Esophagus muscularis mucosa (tissue), 4 donors: ENCODE measurements at regions of chr17 and their contacts with region 1.

Region 1: GRCh38 chr17:31696184-31696602 is 162.9 kb downstream of the COPRS start:
- DNase-seq: peak; percentile 96
- H3K4me3 ChIP-seq: no peak overlapping the region
- H3K27ac ChIP-seq: peak overlapping the region; percentile 71 to 78 (median 76)
- H3K4me1 ChIP-seq: peaks cover 47 to 90% (median 83%) of the 10 kb centered on the region in 4 donors
- H3K27me3 ChIP-seq: no peaks in the 10 kb centered on the region
- CTCF ChIP-seq: peak in 1 of 3 experiments; percentile 36
- EP300 ChIP-seq: no peak
- POLR2A ChIP-seq: no peak

Region 2: GRCh38 chr17:31558748-31559644 is 137.2 kb before region 1 on chr17:
- intact Hi-C with region 1: loop called (anchors 2 kb)
- DNase-seq: no peak
- H3K4me3 ChIP-seq: peak overlapping the region; percentile 65 to 86 (median 68)
- H3K27ac ChIP-seq: peak overlapping the region; percentile 90 to 95 (median 92)
- H3K4me1 ChIP-seq: peaks cover 27 to 54% (median 52%) of the 10 kb centered on the region in 4 donors
- H3K27me3 ChIP-seq: no peaks in the 10 kb centered on the region
- CTCF ChIP-seq: peak; percentile 96 to 98 (median 96)
- EP300 ChIP-seq: no peak
- POLR2A ChIP-seq: no peak

Region 3: DNA sequence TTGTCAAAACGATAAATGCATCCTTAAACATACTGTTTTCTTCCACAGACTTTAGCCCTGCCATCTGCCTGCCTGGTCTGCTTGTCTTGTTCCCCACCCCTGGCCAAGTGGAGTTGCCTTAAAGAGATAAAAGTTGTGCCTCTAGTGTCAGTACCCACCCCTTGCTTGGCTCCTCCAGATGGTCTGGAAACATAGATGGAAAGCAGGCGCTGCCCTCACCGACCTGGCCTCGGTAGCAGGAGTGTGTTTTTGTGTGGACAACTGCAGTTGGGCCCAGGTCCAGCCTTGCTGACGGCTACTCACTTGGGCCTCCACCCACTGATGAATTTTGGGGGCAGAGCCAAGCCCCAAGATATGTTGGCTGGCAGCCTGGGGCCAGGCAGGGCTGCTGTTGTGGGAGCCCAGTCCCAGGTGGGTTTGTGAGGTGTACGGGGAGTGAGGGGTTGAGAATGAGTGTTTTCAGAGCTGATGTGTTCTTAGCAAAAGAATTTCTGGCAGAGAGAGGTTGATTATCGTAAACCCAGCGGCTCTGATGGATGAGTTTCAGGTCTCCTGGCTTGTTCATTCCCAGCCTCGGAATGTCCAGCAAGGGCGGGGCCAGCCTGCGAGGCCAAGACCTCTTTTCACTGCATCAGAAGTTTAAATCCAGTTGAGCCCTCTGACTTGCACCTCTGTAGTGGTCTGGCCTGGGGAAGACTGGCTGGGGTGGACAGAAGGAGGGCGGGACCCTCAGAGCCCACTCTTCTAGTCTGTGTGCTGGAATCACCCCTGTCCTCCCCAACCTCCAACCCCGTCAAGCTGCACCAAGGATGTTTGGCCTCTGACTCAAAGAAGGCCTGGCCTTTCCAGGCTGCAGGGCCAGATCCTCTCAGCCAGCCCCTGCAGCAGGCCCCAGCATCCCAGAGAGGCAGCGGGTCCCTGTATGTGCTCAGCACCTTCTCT is 125.0 kb before region 1 on chr17:
- intact Hi-C with region 1: loop called (anchors 5 kb)
- DNase-seq: peak; percentile 96
- H3K4me3 ChIP-seq: peak overlapping the region in 3 of 4 donors; percentile 7 to 38 (median 10)
- H3K27ac ChIP-seq: peak overlapping the region; percentile 79 to 87 (median 83)
- H3K4me1 ChIP-seq: peaks cover 73 to 96% (median 88%) of the 10 kb centered on the region in 4 donors
- H3K27me3 ChIP-seq: no peaks in the 10 kb centered on the region
- CTCF ChIP-seq: no peak
- EP300 ChIP-seq: peak; percentile 30
- POLR2A ChIP-seq: no peak

Region 4: GRCh38 chr17:31740611-31741082 is 44.5 kb after region 1 on chr17:
- intact Hi-C with region 1: loop called (anchors 5 kb)
- DNase-seq: no peak
- H3K4me3 ChIP-seq: no peak overlapping the region
- H3K27ac ChIP-seq: peak overlapping the region; percentile 57 to 77 (median 66)
- H3K4me1 ChIP-seq: peaks cover 50 to 87% (median 73%) of the 10 kb centered on the region in 4 donors
- H3K27me3 ChIP-seq: no peaks in the 10 kb centered on the region
- CTCF ChIP-seq: no peak
- EP300 ChIP-seq: no peak
- POLR2A ChIP-seq: no peak

Region 5: DNA sequence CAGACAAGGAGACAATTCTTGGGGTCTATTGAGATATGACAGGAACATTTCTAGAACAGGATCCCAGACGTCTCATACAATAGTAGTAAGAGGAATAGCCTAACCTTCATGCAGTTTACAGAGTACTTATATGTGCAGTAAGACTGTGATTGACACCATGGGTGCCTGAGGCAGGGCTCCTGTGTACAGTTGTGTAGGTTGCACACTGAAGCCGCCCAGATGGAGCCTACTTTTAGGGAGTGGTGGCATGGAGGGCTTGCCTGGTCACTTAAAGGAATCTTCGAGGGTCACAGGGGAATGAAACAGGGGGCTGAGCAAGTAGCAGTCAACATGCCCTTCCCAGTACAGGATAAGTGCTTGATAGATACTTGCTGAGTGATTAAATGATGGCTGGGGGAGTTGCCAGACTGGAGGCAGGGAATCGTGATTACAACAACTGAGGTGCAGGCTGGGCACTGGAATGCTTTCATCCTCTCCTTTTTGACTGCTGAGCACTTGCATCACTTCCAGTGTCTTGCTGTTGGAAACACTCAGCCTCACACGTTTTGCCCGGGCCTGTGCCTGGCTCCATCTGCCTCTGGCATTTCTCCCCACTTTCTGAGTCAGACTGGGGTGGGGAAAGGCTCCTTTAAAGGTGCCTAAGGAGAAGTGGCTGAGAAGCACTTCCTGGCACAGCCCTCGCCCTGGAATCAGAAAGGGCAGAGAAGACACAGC is 91.8 kb after region 1 on chr17:
- intact Hi-C with region 1: loop called (anchors 5 kb)
- DNase-seq: no peak
- H3K4me3 ChIP-seq: no peak overlapping the region
- H3K27ac ChIP-seq: peak overlapping the region; percentile 76 to 79 (median 77)
- H3K4me1 ChIP-seq: peaks cover 3 to 14% (median 14%) of the 10 kb centered on the region in 4 donors
- H3K27me3 ChIP-seq: no peaks in the 10 kb centered on the region
- CTCF ChIP-seq: no peak
- EP300 ChIP-seq: peak; percentile 26
- POLR2A ChIP-seq: no peak

Region 6: GRCh38 chr17:31842183-31843069 is 146.2 kb after region 1 on chr17:
- intact Hi-C with region 1: loop called (anchors 5 kb)
- DNase-seq: no peak
- H3K4me3 ChIP-seq: peak overlapping the region; percentile 18 to 39 (median 25)
- H3K27ac ChIP-seq: peak overlapping the region; percentile 62 to 82 (median 72)
- H3K4me1 ChIP-seq: peaks cover 20 to 55% (median 38%) of the 10 kb centered on the region in 4 donors
- H3K27me3 ChIP-seq: no peaks in the 10 kb centered on the region
- CTCF ChIP-seq: peak; percentile 96 to 97 (median 97)
- EP300 ChIP-seq: no peak
- POLR2A ChIP-seq: no peak